Gastrocnemius medialis (tissue), 4 donors: ENCODE measurements at regions of chr9 and their contacts with region 1.

Region 1: GRCh38 chr9:128034821-128035764 is 32.0 kb downstream of the NAIF1 start:
- DNase-seq: peak; percentile 48 to 74
- ATAC-seq: peak; percentile 98 to 99
- H3K4me3 ChIP-seq: no peak overlapping the region
- H3K27ac ChIP-seq: no peak overlapping the region
- H3K4me1 ChIP-seq: no peaks in the 10 kb centered on the region
- H3K27me3 ChIP-seq: no peaks in the 10 kb centered on the region
- CTCF ChIP-seq: peak; percentile 84 to 93 (median 90)
- POLR2A ChIP-seq: no peak

Region 2: GRCh38 chr9:127937388-127938280 is 97.5 kb before region 1 on chr9 and contains the start of gene DPM2:
- in situ Hi-C with region 1: loop called in 2 of 4 experiments (anchors 5 to 10 kb)
- intact Hi-C with region 1: no loop called
- DNase-seq: peak; percentile 63 to 71
- ATAC-seq: peak; percentile 76
- H3K4me3 ChIP-seq: peak within 1 kb of the TSS; percentile 60 to 97 (median 82)
- H3K27ac ChIP-seq: peak within 1 kb of the TSS; percentile 75 to 86 (median 78)
- H3K4me1 ChIP-seq: peaks cover 32 to 33% of the 10 kb centered on the region in 2 donors
- H3K27me3 ChIP-seq: peaks cover 0 to 3% (median 0%) of the 10 kb centered on the region in 3 donors
- CTCF ChIP-seq: no peak
- POLR2A ChIP-seq: peak; percentile 42 to 73
- total RNA-seq, gene DPM2: 4.7 to 10.4 (median 5.9) TPM

Region 3: DNA sequence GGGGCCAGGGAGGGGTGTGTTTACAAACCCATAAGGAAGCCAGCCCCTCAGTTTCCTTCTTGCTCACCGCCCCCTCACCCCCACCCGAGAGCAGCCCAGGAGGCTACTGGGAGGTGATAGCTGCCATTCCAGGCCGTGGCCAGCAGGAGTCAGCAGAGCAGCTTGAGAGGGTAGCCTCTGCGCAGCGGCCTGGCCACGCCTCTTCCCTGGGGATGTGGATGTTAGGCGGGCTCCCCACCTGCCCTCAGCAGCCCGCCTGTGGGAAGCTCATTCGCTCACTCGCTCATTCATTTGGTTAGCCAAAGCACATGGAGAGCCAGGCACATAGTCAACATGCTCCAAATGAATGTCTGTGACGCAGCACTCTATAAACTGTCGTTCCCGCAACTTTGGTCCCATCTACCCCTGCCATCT is 91.4 kb before region 1 on chr9:
- in situ Hi-C with region 1: loop called in 3 of 4 experiments (anchors 5 to 10 kb)
- intact Hi-C with region 1: loop called (anchors 1 kb)
- DNase-seq: peak; percentile 46 to 79
- ATAC-seq: peak; percentile 53 to 74
- H3K4me3 ChIP-seq: no peak overlapping the region
- H3K27ac ChIP-seq: no peak overlapping the region
- H3K4me1 ChIP-seq: peaks cover 7 to 12% of the 10 kb centered on the region in 2 donors
- H3K27me3 ChIP-seq: no peaks in the 10 kb centered on the region
- CTCF ChIP-seq: peak; percentile 75 to 90 (median 84)
- POLR2A ChIP-seq: no peak

Region 4: DNA sequence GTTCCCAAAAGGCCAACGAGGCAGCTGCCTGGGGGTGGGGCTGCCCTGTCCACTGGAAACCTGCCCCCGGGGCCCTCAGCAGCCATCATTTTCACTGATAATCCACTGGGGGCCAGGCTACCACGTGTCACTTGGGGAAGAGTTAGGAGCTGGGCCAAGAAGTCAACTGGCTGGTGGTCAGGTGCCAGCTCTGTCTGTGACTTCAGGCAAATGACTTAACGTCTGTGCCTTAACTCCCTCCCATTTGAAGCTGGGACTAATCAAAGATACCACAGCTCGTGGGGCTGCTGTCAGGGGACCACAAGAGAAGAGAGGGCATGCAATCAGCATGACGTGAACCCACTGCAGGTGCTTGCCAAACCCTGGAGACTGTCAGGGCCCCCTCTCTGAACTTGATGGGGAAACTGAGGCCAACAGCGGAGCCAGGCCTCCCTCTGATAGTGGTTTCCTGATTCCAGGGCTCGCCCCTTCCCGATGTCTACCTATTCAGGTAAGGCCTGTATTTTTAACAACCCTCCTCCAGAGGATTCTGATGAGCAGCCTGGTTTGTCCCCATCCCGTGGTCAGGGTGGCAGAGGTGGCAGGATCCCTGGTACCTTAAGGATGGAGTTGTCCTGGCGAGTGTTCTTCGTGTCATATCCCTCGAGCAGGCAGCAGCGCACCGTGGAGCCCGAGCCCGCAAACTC is 85.1 kb before region 1 on chr9:
- in situ Hi-C with region 1: loop called in 2 of 4 experiments (anchors 5 to 10 kb)
- intact Hi-C with region 1: no loop called
- DNase-seq: no peak
- ATAC-seq: peak in 1 of 2 donors; percentile 31
- H3K4me3 ChIP-seq: no peak overlapping the region
- H3K27ac ChIP-seq: no peak overlapping the region
- H3K4me1 ChIP-seq: peaks cover 15 to 16% of the 10 kb centered on the region in 2 donors
- H3K27me3 ChIP-seq: no peaks in the 10 kb centered on the region
- CTCF ChIP-seq: no peak
- POLR2A ChIP-seq: no peak

Region 5: DNA sequence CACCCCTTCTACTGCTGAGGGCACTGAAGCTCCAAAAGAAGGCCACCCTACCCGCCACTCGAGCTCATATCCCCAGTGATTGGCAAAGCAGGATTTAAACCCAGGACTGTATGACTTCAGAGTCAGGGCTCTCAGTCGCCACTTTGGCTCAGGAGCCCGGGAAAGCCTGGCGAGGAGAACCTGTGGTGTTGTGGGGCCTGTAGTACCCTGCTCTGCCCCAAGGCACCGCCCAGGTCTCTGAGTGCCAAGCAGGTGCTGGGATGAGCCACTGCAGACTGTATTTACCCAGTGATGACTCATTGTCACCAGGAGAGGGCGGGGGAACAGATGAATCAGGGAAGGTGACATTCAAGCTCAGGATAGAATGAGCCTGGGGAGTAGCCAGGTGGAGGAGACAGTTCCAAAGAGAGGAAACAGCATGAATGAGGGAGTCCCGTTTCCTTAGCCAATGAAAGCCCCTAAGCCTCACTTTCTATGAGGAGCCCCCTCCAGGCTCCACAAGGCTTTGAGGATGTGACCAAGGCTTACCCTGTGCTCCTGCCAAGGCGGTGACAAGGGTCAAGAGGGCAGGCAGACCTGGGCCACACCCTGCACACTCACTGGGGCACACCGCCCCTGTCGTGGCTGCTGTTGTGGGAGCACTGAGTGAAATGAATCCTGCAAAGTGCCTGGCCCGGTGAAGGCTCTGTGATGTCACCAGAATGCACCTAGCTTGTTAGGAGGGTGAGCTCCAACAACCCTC is 79.6 kb before region 1 on chr9:
- in situ Hi-C with region 1: loop called in 1 of 4 experiments (anchors 10 kb)
- intact Hi-C with region 1: no loop called
- DNase-seq: peak; percentile 96 to 99
- ATAC-seq: peak; percentile 96 to 99
- H3K4me3 ChIP-seq: peak overlapping the region in 1 of 4 donors; percentile 29
- H3K27ac ChIP-seq: peak overlapping the region; percentile 83 to 92 (median 90)
- H3K4me1 ChIP-seq: peaks cover 16 to 26% of the 10 kb centered on the region in 2 donors
- H3K27me3 ChIP-seq: no peaks in the 10 kb centered on the region
- CTCF ChIP-seq: peak; percentile 53 to 79 (median 69)
- POLR2A ChIP-seq: peak in 1 of 2 donors; percentile 58

Region 6: GRCh38 chr9:127987103-127987614 is 47.9 kb before region 1 on chr9:
- in situ Hi-C with region 1: no loop called
- intact Hi-C with region 1: loop called (anchors 5 kb)
- DNase-seq: peak; percentile 89 to 95
- ATAC-seq: peak; percentile 92 to 96
- H3K4me3 ChIP-seq: no peak overlapping the region
- H3K27ac ChIP-seq: peak overlapping the region; percentile 76 to 83 (median 82)
- H3K4me1 ChIP-seq: peaks cover 14 to 25% of the 10 kb centered on the region in 2 donors
- H3K27me3 ChIP-seq: no peaks in the 10 kb centered on the region
- CTCF ChIP-seq: no peak
- POLR2A ChIP-seq: no peak

Region 7: DNA sequence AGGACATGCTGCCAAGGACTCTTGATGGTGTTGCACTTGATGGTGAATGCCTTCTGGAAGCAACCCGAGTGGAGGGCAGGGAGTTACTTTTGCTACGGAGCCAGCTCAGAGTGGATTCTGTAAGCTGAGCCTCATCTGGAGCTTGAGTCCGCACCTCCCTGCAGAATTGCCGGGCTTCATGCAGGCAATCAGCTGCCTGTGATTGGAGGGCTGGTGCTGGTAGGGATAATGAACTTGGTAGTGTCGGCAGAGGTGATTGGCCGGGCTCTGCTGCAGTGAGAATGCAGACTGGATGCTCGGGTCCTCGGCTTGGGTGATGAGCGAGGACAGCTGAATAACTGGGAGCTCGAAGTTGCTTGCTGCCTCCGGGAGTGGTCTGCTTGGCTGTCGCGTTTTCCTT is 56.1 kb after region 1 on chr9:
- in situ Hi-C with region 1: no loop called
- intact Hi-C with region 1: no loop called
- DNase-seq: peak in 1 of 2 donors; percentile 76
- ATAC-seq: peak in 1 of 2 donors; percentile 40
- H3K4me3 ChIP-seq: peak overlapping the region in 3 of 4 donors; percentile 2 to 14 (median 5)
- H3K27ac ChIP-seq: peak overlapping the region in 3 of 4 donors; percentile 6 to 45 (median 17)
- H3K4me1 ChIP-seq: peaks cover 49 to 50% of the 10 kb centered on the region in 2 donors
- H3K27me3 ChIP-seq: no peaks in the 10 kb centered on the region
- CTCF ChIP-seq: no peak
- POLR2A ChIP-seq: peak in 1 of 2 donors; percentile 11

Region 8: GRCh38 chr9:128333451-128333869 is 298.4 kb after region 1 on chr9:
- in situ Hi-C with region 1: no loop called
- intact Hi-C with region 1: no loop called
- DNase-seq: no peak
- ATAC-seq: no peak
- H3K4me3 ChIP-seq: no peak overlapping the region
- H3K27ac ChIP-seq: no peak overlapping the region
- H3K4me1 ChIP-seq: no peaks in the 10 kb centered on the region
- H3K27me3 ChIP-seq: no peaks in the 10 kb centered on the region
- CTCF ChIP-seq: no peak
- POLR2A ChIP-seq: no peak